ENCODE measurements at regions of chr21 and their contacts with region 1.

Region 1: DNA sequence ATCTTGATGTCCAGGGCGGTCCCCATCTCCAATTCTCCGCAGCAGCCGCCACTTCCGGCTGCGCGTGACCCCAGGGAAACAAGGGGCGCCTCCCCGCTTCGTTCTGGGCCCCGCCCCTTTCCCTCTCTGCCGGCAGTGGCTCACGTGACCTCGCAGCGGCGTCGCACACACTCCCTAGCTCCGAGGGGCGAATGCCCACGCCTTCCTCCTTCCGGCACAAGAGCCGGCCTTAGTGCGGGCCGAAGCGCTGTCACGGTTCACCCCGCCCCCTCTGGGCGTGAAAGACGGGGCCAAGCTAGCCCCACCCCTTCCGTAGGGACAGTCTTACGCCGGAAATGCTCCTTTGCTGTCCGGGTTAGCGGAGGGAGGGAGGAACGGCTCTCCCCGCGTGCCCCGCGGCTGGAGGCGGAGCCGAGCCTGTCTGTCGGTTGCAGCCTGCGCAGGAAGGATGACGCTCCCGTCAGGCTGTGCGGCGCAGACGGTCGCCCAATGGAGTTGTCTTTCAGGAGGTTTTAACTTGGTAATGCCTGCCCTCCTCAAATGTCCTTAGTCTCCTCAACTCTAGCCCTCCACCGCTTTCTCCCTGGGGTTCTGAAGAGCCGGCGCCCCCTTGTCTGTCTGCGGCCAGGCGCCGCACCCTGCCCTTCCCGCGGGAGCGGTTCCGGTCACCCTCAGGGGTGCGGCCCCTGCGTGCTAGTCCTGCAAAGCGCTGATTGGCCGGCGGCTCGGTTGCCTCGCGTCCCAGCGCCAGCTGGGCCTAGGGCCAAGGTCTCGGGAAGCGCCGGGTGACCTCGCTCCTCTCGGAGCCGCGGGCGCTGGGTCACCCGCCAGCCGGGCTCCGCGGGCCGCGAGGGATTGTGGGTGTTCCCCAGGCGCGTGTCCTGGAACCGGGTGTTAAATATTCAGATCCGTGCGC is at the start of gene VPS26C:
- DNase-seq: peak; percentile 97
- H3K4me3 ChIP-seq: peak within 1 kb of the TSS; percentile 90
- CTCF ChIP-seq: no peak

Region 2: GRCh38 chr21:37338671-37339551 is 71.4 kb after region 1 on chr21:
- CTCF ChIA-PET with region 1: no interaction called
- POLR2A ChIA-PET with region 1: interaction called, 11 read pairs
- DNase-seq: peak; percentile 87
- H3K4me3 ChIP-seq: peak overlapping the region; percentile 31
- CTCF ChIP-seq: no peak

Region 3: GRCh38 chr21:37563641-37564340 is 296.3 kb after region 1 on chr21:
- CTCF ChIA-PET with region 1: interaction called, 4 read pairs
- POLR2A ChIA-PET with region 1: interaction called, 10 read pairs
- DNase-seq: peak; percentile 61
- H3K4me3 ChIP-seq: peak overlapping the region; percentile 71
- CTCF ChIP-seq: peak; percentile 48